Esophagus muscularis mucosa (tissue), 4 donors: ENCODE measurements at regions of chr6 and their contacts with region 1.

Region 1: GRCh38 chr6:26553635-26554446 is 15.7 kb downstream of the HMGN4 start:
- DNase-seq: peak; percentile 94
- H3K4me3 ChIP-seq: peak overlapping the region; percentile 51 to 62 (median 57)
- H3K27ac ChIP-seq: peak overlapping the region; percentile 75 to 85 (median 84)
- H3K4me1 ChIP-seq: peaks cover 6 to 27% (median 21%) of the 10 kb centered on the region in 4 donors
- H3K27me3 ChIP-seq: no peaks in the 10 kb centered on the region
- CTCF ChIP-seq: no peak
- EP300 ChIP-seq: no peak
- POLR2A ChIP-seq: no peak

Region 2: DNA sequence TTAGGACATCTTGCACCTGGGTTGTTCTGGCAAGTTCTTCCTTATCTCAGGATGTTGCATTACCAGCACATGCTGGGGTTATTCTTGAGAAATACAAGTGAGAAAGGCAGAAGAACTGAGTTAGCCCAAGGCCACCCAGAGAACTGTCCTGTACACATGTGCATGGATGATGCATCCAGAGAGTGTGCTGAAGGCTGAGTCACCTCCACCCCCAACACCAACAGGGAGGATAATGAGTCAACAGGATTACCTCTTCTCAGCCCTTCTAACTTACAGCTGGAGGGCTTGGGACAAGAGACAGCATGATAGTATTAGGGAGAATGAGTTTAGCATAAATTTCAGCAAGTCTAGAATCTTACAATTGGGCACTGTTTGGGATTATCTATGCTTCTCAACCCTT is 893.3 kb before region 1 on chr6:
- intact Hi-C with region 1: no loop called
- DNase-seq: no peak
- H3K4me3 ChIP-seq: no peak overlapping the region
- H3K27ac ChIP-seq: no peak overlapping the region
- H3K4me1 ChIP-seq: no peaks in the 10 kb centered on the region
- H3K27me3 ChIP-seq: peaks cover 0 to 16% (median 0%) of the 10 kb centered on the region in 4 donors
- CTCF ChIP-seq: no peak
- EP300 ChIP-seq: no peak
- POLR2A ChIP-seq: no peak

Region 3: GRCh38 chr6:26537846-26538571 is 15.8 kb before region 1 on chr6 and contains the start of gene HMGN4:
- intact Hi-C with region 1: loop called (anchors 2 kb)
- DNase-seq: peak; percentile 94
- H3K4me3 ChIP-seq: peak within 1 kb of the TSS; percentile 76 to 95 (median 82)
- H3K27ac ChIP-seq: peak within 1 kb of the TSS; percentile 91 to 97 (median 94)
- H3K4me1 ChIP-seq: peaks cover 31 to 58% (median 52%) of the 10 kb centered on the region in 4 donors
- H3K27me3 ChIP-seq: no peaks in the 10 kb centered on the region
- CTCF ChIP-seq: peak in 1 of 3 experiments; percentile 6
- EP300 ChIP-seq: no peak
- POLR2A ChIP-seq: peak; percentile 45
- total RNA-seq, gene HMGN4: 80.2 to 117 (median 86.5) TPM